ENCODE measurements at regions of chr17 and their contacts with region 1.

Region 1: GRCh38 chr17:65799869-65800268 is 238.4 kb upstream of the AXIN2 start:
- DNase-seq: no peak
- ATAC-seq: peak; percentile 72
- H3K4me3 Mint-ChIP-seq: no peak overlapping the region
- H3K27ac Mint-ChIP-seq: peak overlapping the region; percentile 78
- H3K4me1 Mint-ChIP-seq: peaks cover 26% of the 10 kb centered on the region
- H3K27me3 Mint-ChIP-seq: peaks cover 3% of the 10 kb centered on the region

Region 2: GRCh38 chr17:65523853-65524664 is 275.8 kb before region 1 on chr17:
- CTCF ChIA-PET with region 1: no interaction called
- POLR2A ChIA-PET with region 1: no interaction called
- intact Hi-C with region 1: loop called in 1 of 2 experiments (anchors 1 kb)
- DNase-seq: no peak
- ATAC-seq: no peak
- H3K4me3 Mint-ChIP-seq: no peak overlapping the region
- H3K27ac Mint-ChIP-seq: peak overlapping the region; percentile 53
- H3K4me1 Mint-ChIP-seq: peaks cover 26% of the 10 kb centered on the region
- H3K27me3 Mint-ChIP-seq: no peaks in the 10 kb centered on the region

Region 3: DNA sequence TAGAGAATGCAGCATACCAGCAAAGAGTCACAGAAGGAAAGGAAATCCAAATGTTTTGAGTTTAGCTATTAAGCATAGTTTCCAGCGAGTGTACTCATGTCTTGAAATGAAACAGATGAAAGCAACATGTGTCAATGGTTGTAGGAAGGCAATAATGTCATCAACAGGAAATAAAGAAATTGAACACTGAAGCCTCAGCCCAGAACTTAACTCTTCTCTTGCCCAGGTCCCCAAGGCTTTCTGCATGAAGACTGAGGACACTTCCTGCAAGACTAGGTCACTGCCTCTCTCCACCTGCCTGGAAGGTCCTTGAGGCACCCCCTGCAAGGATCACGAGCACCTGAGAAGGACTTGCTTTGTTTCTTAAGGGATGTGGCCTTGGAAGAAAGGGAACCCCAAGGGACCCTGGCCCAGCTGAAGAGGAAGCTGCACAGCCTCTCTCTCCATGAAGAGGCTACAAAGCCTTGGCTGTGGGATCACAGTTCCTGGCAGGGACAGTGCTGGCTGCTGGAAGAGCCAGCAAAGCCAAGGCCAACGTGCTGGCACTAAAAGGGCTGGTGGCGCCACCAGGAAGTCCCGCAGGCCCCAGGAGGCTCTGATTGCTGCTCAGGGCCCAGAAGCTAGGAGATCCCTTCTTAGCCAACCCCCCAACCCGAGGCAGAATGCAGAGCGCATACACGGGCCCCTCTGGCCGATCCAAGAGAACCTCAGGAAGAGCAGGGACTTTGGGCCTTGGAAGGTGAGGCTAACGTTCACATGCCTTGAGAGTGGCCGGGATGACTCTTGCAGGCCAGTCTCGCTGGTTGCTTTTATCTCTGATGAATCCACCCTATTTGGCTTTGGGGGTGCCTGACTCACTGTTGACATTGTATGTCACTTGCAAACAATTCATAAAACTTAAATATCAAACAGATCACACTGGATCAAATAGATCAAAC is 215.0 kb before region 1 on chr17:
- CTCF ChIA-PET with region 1: interaction called, 4 read pairs
- POLR2A ChIA-PET with region 1: no interaction called
- intact Hi-C with region 1: loop called in 1 of 2 experiments (anchors 1 kb)
- DNase-seq: no peak
- ATAC-seq: peak; percentile 77
- H3K4me3 Mint-ChIP-seq: no peak overlapping the region
- H3K27ac Mint-ChIP-seq: peak overlapping the region; percentile 72
- H3K4me1 Mint-ChIP-seq: peaks cover 43% of the 10 kb centered on the region
- H3K27me3 Mint-ChIP-seq: no peaks in the 10 kb centered on the region

Measured in activated CD4-positive, alpha-beta T cell treated with anti-CD3 and anti-CD28 coated beads for 36 hours (primary cell).